GM12878 (cell line): ENCODE measurements at regions of chr19 and their contacts with region 1.

Region 1: DNA sequence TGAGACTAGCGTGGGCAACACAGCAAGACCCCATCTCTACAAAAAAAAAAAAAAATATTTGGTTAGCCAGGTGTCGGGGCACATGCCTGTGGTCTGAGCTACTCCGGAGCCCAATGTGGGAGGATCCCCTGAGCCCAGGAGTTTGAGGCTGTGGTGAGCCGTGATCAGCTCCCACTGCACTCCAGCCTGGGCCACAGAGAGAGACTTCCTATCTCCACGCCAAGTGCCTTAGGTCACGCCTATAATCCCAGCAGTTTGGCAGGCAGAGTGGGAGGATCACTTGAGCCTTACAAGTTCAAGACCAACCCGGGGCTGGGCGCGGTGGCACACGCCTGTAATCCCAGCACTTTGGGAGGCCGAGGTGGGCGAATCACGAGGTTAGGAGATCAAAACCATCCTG is 8.7 kb upstream of the ADAT3 start:
- DNase-seq: no peak
- ATAC-seq: no peak
- H3K4me3 ChIP-seq: peak overlapping the region; percentile 52; the same call in 1 of the 2 replicates
- H3K27ac ChIP-seq: 0 out of 2 replicates have a peak overlapping the region, but pooled peaks have one; percentile 66
- H3K4me1 ChIP-seq: peaks cover 23% of the 10 kb centered on the region
- H3K27me3 ChIP-seq: no peaks in the 10 kb centered on the region
- CTCF ChIP-seq: no peak
- EP300 ChIP-seq: no peak
- POLR2A ChIP-seq: no peak
- RAD21 ChIP-seq: no peak

Region 2: GRCh38 chr19:1875646-1876495 is 20.6 kb before region 1 on chr19:
- CTCF ChIA-PET with region 1: interaction called, 10 read pairs
- POLR2A ChIA-PET with region 1: interaction called, 9 read pairs
- RAD21 ChIA-PET with region 1: interaction called, 8 read pairs
- SMC1A ChIA-PET with region 1: interaction called, 6 read pairs
- in situ Hi-C with region 1: no loop called
- intact Hi-C with region 1: no loop called
- DNase-seq: peak; percentile 51
- ATAC-seq: peak; percentile 98
- H3K4me3 ChIP-seq: peak overlapping the region; percentile 89
- H3K27ac ChIP-seq: peak overlapping the region; percentile 93
- H3K4me1 ChIP-seq: peaks cover 3% of the 10 kb centered on the region; the same call in 1 of the 2 replicates
- H3K27me3 ChIP-seq: no peaks in the 10 kb centered on the region
- CTCF ChIP-seq: no peak
- EP300 ChIP-seq: peak in 1 of 2 experiments; percentile 44; a peak in 1 of 4 replicates
- POLR2A ChIP-seq: peak; percentile 96
- RAD21 ChIP-seq: no peak

Region 3: GRCh38 chr19:1929021-1929742 is 32.7 kb after region 1 on chr19:
- CTCF ChIA-PET with region 1: interaction called, 11 read pairs
- POLR2A ChIA-PET with region 1: interaction called, 7 read pairs
- RAD21 ChIA-PET with region 1: interaction called, 4 read pairs
- SMC1A ChIA-PET with region 1: interaction called, 9 read pairs
- in situ Hi-C with region 1: no loop called
- intact Hi-C with region 1: loop called (anchors 2 kb)
- DNase-seq: no peak
- ATAC-seq: peak; percentile 98
- H3K4me3 ChIP-seq: peak overlapping the region; percentile 45; the same call in 1 of the 2 replicates
- H3K27ac ChIP-seq: no peak overlapping the region
- H3K4me1 ChIP-seq: peaks cover 9% of the 10 kb centered on the region
- H3K27me3 ChIP-seq: no peaks in the 10 kb centered on the region
- CTCF ChIP-seq: peak; percentile 83 to 97 (median 85)
- EP300 ChIP-seq: no peak
- POLR2A ChIP-seq: no peak
- RAD21 ChIP-seq: peak; percentile 89

Region 4: GRCh38 chr19:1942078-1942933 is 45.8 kb after region 1 on chr19:
- CTCF ChIA-PET with region 1: interaction called, 6 read pairs
- POLR2A ChIA-PET with region 1: interaction called, 15 read pairs
- RAD21 ChIA-PET with region 1: interaction called, 3 read pairs
- SMC1A ChIA-PET with region 1: no interaction called
- in situ Hi-C with region 1: no loop called
- intact Hi-C with region 1: no loop called
- DNase-seq: peak; percentile 42
- ATAC-seq: peak; percentile 77
- H3K4me3 ChIP-seq: peak overlapping the region; percentile 98
- H3K27ac ChIP-seq: peak overlapping the region; percentile 76
- H3K4me1 ChIP-seq: peaks cover 13% of the 10 kb centered on the region
- H3K27me3 ChIP-seq: no peaks in the 10 kb centered on the region
- CTCF ChIP-seq: no peak
- EP300 ChIP-seq: no peak
- POLR2A ChIP-seq: peak; percentile 71
- RAD21 ChIP-seq: no peak

Region 5: GRCh38 chr19:2050991-2051772 is 154.7 kb after region 1 on chr19 and contains the start of gene MKNK2:
- CTCF ChIA-PET with region 1: interaction called, 6 read pairs
- POLR2A ChIA-PET with region 1: interaction called, 7 read pairs
- RAD21 ChIA-PET with region 1: interaction called, 3 read pairs
- SMC1A ChIA-PET with region 1: no interaction called
- in situ Hi-C with region 1: no loop called
- intact Hi-C with region 1: loop called (anchors 5 kb)
- DNase-seq: no peak
- ATAC-seq: peak; percentile 48
- H3K4me3 ChIP-seq: peak within 1 kb of the TSS; percentile 83
- H3K27ac ChIP-seq: peak within 1 kb of the TSS; percentile 86
- H3K4me1 ChIP-seq: peaks cover 57% of the 10 kb centered on the region
- H3K27me3 ChIP-seq: no peaks in the 10 kb centered on the region
- CTCF ChIP-seq: peak; percentile 49 to 75 (median 55); a peak in 5 of 6 replicates
- EP300 ChIP-seq: no peak
- POLR2A ChIP-seq: peak; percentile 98
- RAD21 ChIP-seq: no peak
- polyA plus RNA-seq, gene MKNK2: 9.6 to 17.6 TPM